Posterior vena cava (tissue), 2 donors: ENCODE measurements at regions of chr9 and their contacts with region 1.

Region 1: DNA sequence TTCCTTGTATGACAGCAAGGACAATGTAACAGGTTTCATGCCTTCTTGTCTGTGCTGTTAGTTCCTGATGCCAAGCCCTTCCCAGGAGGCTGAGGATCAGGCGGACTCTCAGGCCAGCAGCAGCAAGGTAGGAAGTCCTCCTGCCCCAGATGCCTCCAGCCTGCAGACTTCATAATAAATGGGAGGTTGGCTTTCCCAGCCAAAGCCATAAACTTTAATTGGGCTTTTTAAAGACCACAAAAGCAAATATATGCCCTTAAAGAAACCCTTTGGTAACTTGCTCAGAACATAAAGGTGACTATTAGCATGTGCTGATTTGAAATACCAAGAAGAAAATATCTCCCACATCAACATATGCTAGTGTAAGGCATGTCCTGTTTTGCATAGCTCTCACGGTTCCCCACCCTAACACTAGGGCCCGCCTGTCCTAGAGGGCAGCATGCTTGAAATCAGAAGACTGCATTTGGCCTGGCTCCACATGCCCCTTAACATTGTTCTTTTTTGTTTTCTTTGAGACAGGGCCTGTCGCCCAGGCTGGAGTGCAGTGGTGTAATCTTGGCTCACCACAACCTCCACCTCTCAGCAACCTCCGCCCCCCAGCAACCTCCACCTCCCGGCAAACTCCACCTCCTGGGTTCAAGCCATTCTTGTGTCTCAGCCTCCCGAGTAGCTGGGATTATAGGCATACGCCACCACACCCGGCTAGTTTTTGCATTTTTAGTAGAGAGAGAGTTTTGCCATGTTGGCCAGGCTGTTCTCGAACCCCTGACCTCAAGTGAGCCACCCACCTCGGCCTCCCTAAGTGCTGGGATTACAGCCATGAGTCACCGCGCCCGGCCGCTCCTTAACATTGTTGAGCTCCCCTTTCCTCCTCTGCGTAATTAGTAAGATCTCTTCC is 44.6 kb upstream of the FCN1 start:
- DNase-seq: peak; percentile 69

Region 2: GRCh38 chr9:135797507-135798262 is 835.4 kb after region 1 on chr9:
- intact Hi-C with region 1: loop called in 1 of 2 experiments (anchors 5 kb)
- DNase-seq: no peak